Vagina (tissue), 2 donors: ENCODE measurements at regions of chr5 and their contacts with region 1.

Region 1: DNA sequence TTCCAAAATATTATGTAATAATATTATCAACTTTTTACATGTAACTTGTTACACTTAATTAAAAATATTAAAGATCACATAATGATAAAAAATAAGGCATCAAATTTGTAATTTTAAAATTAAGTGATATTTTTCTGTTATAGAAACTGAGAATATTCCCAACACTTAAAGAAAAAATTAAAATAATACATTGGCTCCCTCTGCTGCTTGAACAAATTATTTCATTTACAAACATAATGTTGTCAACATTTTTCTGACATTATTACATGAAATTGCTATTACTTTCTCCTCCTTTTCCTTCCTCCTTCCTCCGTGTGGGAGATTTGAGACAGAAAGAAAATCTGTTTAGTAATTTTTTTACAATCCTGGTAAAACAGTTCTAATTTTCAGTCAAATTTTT is 42.3 kb downstream of the RNF180 start:
- DNase-seq: no peak
- H3K4me3 ChIP-seq: no peak overlapping the region
- H3K27ac ChIP-seq: no peak overlapping the region
- H3K4me1 ChIP-seq: no peaks in the 10 kb centered on the region
- H3K27me3 ChIP-seq: no peaks in the 10 kb centered on the region
- CTCF ChIP-seq: peak in 2 of 3 experiments; percentile 23 to 24
- POLR2A ChIP-seq: no peak

Region 2: DNA sequence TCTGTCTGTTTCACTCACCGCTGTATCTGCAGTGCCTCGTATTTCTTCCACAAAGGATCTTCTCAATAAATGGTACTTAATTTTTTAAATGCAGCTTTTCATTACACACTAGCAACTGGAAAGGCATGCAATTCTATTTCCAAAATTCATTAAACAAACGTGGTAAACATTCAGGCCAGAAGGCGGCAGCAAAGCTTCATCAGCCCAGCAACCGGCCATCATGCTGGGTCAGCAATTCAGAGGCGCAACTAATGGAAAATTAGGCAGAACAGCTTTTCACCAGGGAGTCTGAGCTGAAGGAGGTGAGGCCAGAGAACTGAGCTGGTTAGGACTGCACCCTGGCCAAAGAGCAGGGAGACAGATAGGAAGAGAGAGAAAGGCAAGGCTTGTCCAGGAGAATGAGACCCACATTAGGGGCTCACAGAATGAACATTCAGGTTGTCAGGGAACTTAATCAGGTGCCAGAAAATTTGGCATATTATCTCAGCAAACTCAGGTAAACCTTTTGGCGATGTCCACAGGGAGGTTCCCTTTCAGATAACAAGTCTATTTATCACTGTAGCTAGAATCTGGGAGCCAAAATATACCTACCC is 60.0 kb before region 1 on chr5:
- intact Hi-C with region 1: loop called (anchors 5 kb)
- DNase-seq: no peak
- H3K4me3 ChIP-seq: no peak overlapping the region
- H3K27ac ChIP-seq: no peak overlapping the region
- H3K4me1 ChIP-seq: peaks cover 9% of the 10 kb centered on the region
- H3K27me3 ChIP-seq: no peaks in the 10 kb centered on the region
- CTCF ChIP-seq: peak; percentile 36 to 64 (median 46)
- POLR2A ChIP-seq: no peak